Colonic mucosa (tissue), 4 donors: ENCODE measurements at regions of chr17 and their contacts with region 1.

Region 1: GRCh38 chr17:10327640-10328039 is 45.2 kb downstream of the MYH13 start:
- DNase-seq: peak; percentile 85
- H3K4me3 ChIP-seq: no peak overlapping the region
- H3K27ac ChIP-seq: no peak overlapping the region
- H3K4me1 ChIP-seq: no peaks in the 10 kb centered on the region
- H3K27me3 ChIP-seq: no peaks in the 10 kb centered on the region
- CTCF ChIP-seq: peak; percentile 88

Region 2: DNA sequence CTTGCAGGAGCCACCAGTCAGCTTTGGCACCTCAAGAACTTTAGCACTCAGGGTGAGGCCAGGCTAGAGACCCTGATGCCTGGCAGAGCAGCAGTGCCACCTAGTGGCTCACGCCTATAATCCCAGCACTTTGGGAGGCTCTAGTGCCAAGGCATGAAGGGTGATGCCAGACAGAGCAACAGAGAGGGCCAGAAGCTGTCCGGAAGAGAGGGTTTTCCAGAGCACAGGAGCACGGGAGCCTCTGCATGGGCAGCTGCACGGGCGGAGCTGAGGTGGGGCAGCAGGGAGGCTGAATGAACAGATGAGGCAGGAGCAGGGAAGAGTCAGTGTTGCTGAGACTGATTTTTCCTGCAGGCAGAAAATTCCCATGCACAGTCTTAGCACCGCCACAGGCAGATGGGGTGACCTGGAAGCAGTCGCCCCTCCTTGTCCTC is 290.6 kb after region 1 on chr17:
- intact Hi-C with region 1: loop called (anchors 2 kb)
- DNase-seq: peak; percentile 72
- H3K4me3 ChIP-seq: no peak overlapping the region
- H3K27ac ChIP-seq: no peak overlapping the region
- H3K4me1 ChIP-seq: no peaks in the 10 kb centered on the region
- H3K27me3 ChIP-seq: no peaks in the 10 kb centered on the region
- CTCF ChIP-seq: peak; percentile 89